A673 (cell line): ENCODE measurements at regions of chr13 and their contacts with region 1.

Region 1: DNA sequence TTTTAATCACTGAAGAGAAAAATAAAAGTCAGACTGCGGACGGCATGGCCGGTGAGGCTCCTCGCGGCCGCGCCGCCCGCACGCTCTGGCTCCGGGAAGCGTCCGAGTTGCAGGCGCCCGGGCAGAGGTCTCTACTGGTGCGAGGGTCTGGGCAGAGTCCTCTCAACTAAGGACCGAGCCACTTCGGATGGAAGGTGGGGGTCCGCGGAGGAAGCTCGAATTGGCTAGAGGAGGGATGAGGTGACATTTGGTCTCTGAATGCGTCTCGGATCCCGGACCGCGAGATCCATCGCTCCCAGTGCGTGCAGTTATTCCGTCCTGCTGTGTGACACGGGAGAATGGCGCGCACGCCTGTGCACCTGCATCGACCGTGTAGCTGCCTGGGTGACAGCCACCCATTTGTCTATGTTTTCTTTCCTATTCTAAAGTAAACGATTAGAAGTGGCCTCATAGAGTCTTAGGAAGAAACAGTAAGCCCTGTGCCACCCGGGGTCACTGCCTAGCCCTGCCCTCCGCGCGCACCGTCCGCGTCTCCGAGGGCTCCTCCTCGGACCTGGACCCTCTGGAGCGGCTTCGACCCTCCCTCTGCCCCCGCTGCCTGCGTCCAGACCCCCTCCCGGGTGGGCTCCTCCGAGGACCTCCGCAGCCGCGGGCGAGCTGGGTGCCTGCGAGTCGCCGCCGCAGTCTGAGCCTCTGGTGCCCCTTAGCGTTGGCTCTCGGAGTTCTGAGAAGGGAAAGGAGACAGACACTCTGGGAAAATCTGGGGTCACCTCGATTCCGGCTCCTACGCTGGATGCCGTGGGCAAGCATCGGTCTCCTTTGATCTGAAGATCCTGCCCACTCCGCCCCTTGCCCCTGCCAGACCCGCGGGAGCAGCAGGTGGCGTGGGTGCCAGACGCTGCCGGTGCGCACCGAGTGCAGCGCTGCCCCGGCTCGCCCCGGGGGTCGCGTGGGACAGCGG is 347.4 kb downstream of the LIG4 start:
- DNase-seq: peak; percentile 75
- H3K4me3 ChIP-seq: peak overlapping the region; percentile 59
- H3K27ac ChIP-seq: no peak overlapping the region
- H3K4me1 ChIP-seq: peaks cover 4% of the 10 kb centered on the region
- H3K27me3 ChIP-seq: peaks cover 34% of the 10 kb centered on the region
- CTCF ChIP-seq: peak; percentile 61

Region 2: DNA sequence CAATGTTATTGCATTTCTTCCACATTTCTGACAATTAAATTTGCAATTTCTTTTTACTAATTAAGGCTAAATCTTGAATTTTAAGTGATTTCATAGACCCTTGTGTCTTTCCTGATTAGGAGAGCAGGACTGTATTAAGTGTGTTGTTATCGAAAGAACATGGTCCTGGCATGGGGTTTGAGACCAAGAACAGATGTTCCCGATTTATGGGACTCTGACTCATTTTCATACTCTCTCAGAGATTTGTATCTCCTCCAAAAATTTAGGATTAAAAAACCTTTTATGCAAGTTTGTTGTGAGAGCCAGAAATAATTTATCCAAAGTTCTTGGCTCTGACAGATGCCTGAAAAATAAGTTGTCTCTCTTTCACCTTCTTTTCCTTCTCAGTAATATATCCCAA is 710.7 kb before region 1 on chr13:
- CTCF ChIA-PET with region 1: no interaction called
- POLR2A ChIA-PET with region 1: no interaction called
- intact Hi-C with region 1: no loop called
- DNase-seq: peak; percentile 48
- H3K4me3 ChIP-seq: no peak overlapping the region
- H3K27ac ChIP-seq: peak overlapping the region; percentile 14
- H3K4me1 ChIP-seq: peaks cover 8% of the 10 kb centered on the region
- H3K27me3 ChIP-seq: no peaks in the 10 kb centered on the region
- CTCF ChIP-seq: no peak

Region 3: GRCh38 chr13:107211073-107211472 is 656.9 kb before region 1 on chr13:
- CTCF ChIA-PET with region 1: no interaction called
- POLR2A ChIA-PET with region 1: no interaction called
- intact Hi-C with region 1: loop called (anchors 1 kb)
- DNase-seq: peak; percentile 94
- H3K4me3 ChIP-seq: peak overlapping the region; percentile 22
- H3K27ac ChIP-seq: no peak overlapping the region
- H3K4me1 ChIP-seq: no peaks in the 10 kb centered on the region
- H3K27me3 ChIP-seq: no peaks in the 10 kb centered on the region
- CTCF ChIP-seq: peak; percentile 95

Region 4: GRCh38 chr13:107373551-107373950 is 494.4 kb before region 1 on chr13:
- CTCF ChIA-PET with region 1: no interaction called
- POLR2A ChIA-PET with region 1: no interaction called
- intact Hi-C with region 1: loop called (anchors 2 kb)
- DNase-seq: peak; percentile 59
- H3K4me3 ChIP-seq: no peak overlapping the region
- H3K27ac ChIP-seq: no peak overlapping the region
- H3K4me1 ChIP-seq: no peaks in the 10 kb centered on the region
- H3K27me3 ChIP-seq: no peaks in the 10 kb centered on the region
- CTCF ChIP-seq: peak; percentile 66

Region 5: DNA sequence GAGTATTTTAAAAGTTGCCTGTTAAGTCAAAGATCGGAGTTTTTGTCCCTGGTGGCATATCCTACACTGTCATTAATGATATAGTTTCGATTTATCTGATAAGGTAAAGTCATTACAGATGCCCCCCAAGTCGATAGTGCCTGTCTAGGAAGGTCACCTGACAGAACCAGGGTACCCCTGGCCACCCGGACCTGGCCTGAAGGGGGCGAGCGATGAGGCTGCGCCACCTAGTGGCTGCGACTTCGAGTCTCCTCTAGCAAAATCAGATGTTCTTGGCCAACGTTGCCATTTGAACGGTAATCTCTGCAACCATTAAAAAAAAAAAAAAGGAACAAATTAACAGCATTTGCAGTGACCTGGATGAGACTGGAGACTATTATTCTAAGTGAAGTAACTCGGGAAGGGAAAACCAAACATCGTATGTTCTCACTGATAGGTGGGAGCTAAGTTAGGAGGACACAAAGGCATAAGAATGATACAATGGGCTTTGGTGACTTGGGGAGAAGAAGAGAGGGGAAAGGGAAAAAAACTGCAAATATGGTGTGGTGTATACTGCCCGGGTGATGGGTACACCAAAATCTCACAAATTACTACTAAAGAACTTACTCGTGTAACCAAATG is 217.8 kb before region 1 on chr13:
- CTCF ChIA-PET with region 1: no interaction called
- POLR2A ChIA-PET with region 1: no interaction called
- intact Hi-C with region 1: loop called (anchors 5 kb)
- DNase-seq: peak; percentile 64
- H3K4me3 ChIP-seq: no peak overlapping the region
- H3K27ac ChIP-seq: no peak overlapping the region
- H3K4me1 ChIP-seq: no peaks in the 10 kb centered on the region
- H3K27me3 ChIP-seq: no peaks in the 10 kb centered on the region
- CTCF ChIP-seq: peak; percentile 95

Region 6: DNA sequence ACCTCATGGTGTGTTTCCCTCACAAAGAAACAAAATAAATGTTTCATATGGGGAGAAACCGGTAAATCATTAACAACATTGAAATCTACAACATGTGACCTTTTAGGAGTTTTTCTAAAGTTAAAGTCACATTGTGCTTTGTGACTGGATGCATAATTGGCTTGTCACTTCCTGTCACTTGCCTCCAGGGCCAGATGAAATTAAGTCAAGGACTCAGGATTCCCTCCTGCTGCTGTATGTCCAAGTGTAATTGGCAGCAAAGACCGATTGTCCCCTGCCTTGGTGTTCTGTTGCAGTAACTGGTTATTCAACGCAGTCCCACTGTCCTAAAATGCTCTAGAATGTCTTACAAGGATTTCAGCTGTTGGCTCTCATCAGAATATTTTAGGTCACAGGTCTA is 100.9 kb before region 1 on chr13:
- CTCF ChIA-PET with region 1: no interaction called
- POLR2A ChIA-PET with region 1: no interaction called
- intact Hi-C with region 1: no loop called
- DNase-seq: peak; percentile 55
- H3K4me3 ChIP-seq: no peak overlapping the region
- H3K27ac ChIP-seq: no peak overlapping the region
- H3K4me1 ChIP-seq: peaks cover 10% of the 10 kb centered on the region
- H3K27me3 ChIP-seq: no peaks in the 10 kb centered on the region
- CTCF ChIP-seq: no peak

Region 7: GRCh38 chr13:108102771-108103170 is 234.8 kb after region 1 on chr13:
- CTCF ChIA-PET with region 1: interaction called, 11 read pairs
- POLR2A ChIA-PET with region 1: no interaction called
- intact Hi-C with region 1: no loop called
- DNase-seq: peak; percentile 32
- H3K4me3 ChIP-seq: no peak overlapping the region
- H3K27ac ChIP-seq: no peak overlapping the region
- H3K4me1 ChIP-seq: peaks cover 9% of the 10 kb centered on the region
- H3K27me3 ChIP-seq: no peaks in the 10 kb centered on the region
- CTCF ChIP-seq: no peak

Region 8: DNA sequence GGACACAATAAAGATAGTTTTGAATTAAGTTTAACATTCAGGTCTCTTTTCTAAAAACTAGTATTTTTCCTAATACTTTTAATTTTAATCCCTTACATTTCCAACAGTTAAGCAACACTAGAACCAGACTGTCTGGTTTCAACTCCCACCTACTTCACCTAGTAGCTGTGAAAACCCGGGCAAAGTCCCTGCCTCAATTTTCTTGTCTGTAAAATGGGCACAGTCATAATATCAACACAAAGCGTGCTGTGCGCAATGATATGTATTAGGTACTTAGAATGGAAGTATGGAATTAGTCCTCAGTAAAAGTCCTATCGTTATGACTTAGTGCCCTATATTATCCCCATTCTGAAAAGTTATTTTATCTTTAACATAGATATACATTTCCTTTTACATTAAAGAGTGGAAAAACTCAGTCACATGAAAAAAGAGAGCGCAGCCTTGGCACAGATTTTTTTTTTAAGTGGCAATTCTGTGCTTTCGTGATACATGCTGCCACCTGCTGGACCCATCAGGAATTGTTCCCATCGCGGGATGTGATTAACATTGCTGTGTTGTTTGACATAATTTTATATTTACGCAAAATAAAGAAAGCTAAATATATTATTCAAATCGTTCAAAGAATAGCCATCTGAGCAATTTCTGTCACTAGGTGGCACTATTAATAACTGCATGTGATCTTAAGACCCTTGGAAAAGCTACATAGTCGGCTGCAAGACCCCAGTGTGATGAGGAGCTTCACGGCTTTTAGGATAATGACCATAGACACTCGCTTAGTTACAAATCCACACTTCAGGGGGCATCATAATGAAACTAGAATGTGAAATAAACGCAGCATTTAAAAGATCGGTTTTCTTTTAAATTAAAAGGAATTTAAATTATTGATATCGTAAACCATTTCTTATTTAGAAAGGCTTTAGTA is 287.5 kb after region 1 on chr13:
- CTCF ChIA-PET with region 1: no interaction called
- POLR2A ChIA-PET with region 1: no interaction called
- intact Hi-C with region 1: loop called (anchors 10 kb)
- DNase-seq: peak; percentile 68
- H3K4me3 ChIP-seq: no peak overlapping the region
- H3K27ac ChIP-seq: no peak overlapping the region
- H3K4me1 ChIP-seq: no peaks in the 10 kb centered on the region
- H3K27me3 ChIP-seq: no peaks in the 10 kb centered on the region
- CTCF ChIP-seq: peak; percentile 91

Region 9: DNA sequence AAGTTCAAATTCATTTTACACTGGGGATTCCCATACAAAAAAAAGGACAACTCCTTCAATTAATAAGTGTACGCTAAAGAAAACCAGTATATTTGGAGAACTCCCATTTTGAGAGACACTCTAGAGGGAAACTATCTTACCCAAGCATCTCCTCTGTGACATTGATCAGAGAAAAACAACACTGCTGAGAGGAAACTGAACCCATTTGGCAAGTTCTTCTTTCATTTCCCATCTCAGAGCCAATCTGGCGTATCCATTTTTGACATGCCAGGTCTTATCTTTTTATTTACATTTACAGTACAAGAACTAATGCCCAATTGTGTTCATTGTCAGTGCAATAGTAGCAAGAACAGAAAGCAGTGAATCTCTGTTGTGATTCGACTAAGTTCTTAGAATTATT is 317.2 kb after region 1 on chr13:
- CTCF ChIA-PET with region 1: no interaction called
- POLR2A ChIA-PET with region 1: no interaction called
- intact Hi-C with region 1: no loop called
- DNase-seq: no peak
- H3K4me3 ChIP-seq: no peak overlapping the region
- H3K27ac ChIP-seq: no peak overlapping the region
- H3K4me1 ChIP-seq: peaks cover 11% of the 10 kb centered on the region
- H3K27me3 ChIP-seq: no peaks in the 10 kb centered on the region
- CTCF ChIP-seq: no peak

Region 10: GRCh38 chr13:108483981-108484380 is 616.0 kb after region 1 on chr13:
- CTCF ChIA-PET with region 1: no interaction called
- POLR2A ChIA-PET with region 1: no interaction called
- intact Hi-C with region 1: no loop called
- DNase-seq: no peak
- H3K4me3 ChIP-seq: no peak overlapping the region
- H3K27ac ChIP-seq: no peak overlapping the region
- H3K4me1 ChIP-seq: no peaks in the 10 kb centered on the region
- H3K27me3 ChIP-seq: no peaks in the 10 kb centered on the region
- CTCF ChIP-seq: no peak